Sigmoid colon (tissue), 7 donors: ENCODE measurements at regions of chr11 and their contacts with region 1.

Region 1: GRCh38 chr11:32176223-32176934 is 85.5 kb downstream of the RCN1 start:
- DNase-seq: peak; percentile 79
- H3K4me3 ChIP-seq: no peak overlapping the region
- H3K27ac ChIP-seq: no peak overlapping the region
- H3K4me1 ChIP-seq: peaks cover 0 to 7% (median 3%) of the 10 kb centered on the region in 4 donors
- H3K27me3 ChIP-seq: peaks cover 0 to 3% (median 0%) of the 10 kb centered on the region in 3 donors
- CTCF ChIP-seq: peak; percentile 52 to 83 (median 62)
- EP300 ChIP-seq: no peak
- POLR2A ChIP-seq: no peak

Region 2: GRCh38 chr11:31968461-31969358 is 207.7 kb before region 1 on chr11:
- intact Hi-C with region 1: no loop called
- DNase-seq: no peak
- H3K4me3 ChIP-seq: no peak overlapping the region
- H3K27ac ChIP-seq: no peak overlapping the region
- H3K4me1 ChIP-seq: no peaks in the 10 kb centered on the region
- H3K27me3 ChIP-seq: no peaks in the 10 kb centered on the region
- CTCF ChIP-seq: no peak
- EP300 ChIP-seq: no peak
- POLR2A ChIP-seq: no peak

Region 3: GRCh38 chr11:32052218-32052617 is 124.2 kb before region 1 on chr11:
- intact Hi-C with region 1: loop called (anchors 1 kb)
- DNase-seq: peak; percentile 70
- H3K4me3 ChIP-seq: no peak overlapping the region
- H3K27ac ChIP-seq: no peak overlapping the region
- H3K4me1 ChIP-seq: no peaks in the 10 kb centered on the region
- H3K27me3 ChIP-seq: peaks cover 0 to 17% (median 0%) of the 10 kb centered on the region in 3 donors
- CTCF ChIP-seq: peak; percentile 13 to 77 (median 59)
- EP300 ChIP-seq: no peak
- POLR2A ChIP-seq: no peak